Colonic mucosa (tissue), 4 donors: ENCODE measurements at regions of chr2 and their contacts with region 1.

Region 1: GRCh38 chr2:174688079-174688478 is 76.2 kb downstream of the CHRNA1 start:
- DNase-seq: no peak
- H3K4me3 ChIP-seq: no peak overlapping the region
- H3K27ac ChIP-seq: no peak overlapping the region
- H3K4me1 ChIP-seq: no peaks in the 10 kb centered on the region
- H3K27me3 ChIP-seq: peaks cover 5% of the 10 kb centered on the region
- CTCF ChIP-seq: peak; percentile 39

Region 2: GRCh38 chr2:174198822-174199564 is 489.1 kb before region 1 on chr2:
- intact Hi-C with region 1: no loop called
- DNase-seq: no peak
- H3K4me3 ChIP-seq: no peak overlapping the region
- H3K27ac ChIP-seq: no peak overlapping the region
- H3K4me1 ChIP-seq: no peaks in the 10 kb centered on the region
- H3K27me3 ChIP-seq: no peaks in the 10 kb centered on the region
- CTCF ChIP-seq: no peak

Region 3: GRCh38 chr2:174465327-174465726 is 222.8 kb before region 1 on chr2:
- intact Hi-C with region 1: loop called (anchors 2 kb)
- DNase-seq: no peak
- H3K4me3 ChIP-seq: no peak overlapping the region
- H3K27ac ChIP-seq: no peak overlapping the region
- H3K4me1 ChIP-seq: no peaks in the 10 kb centered on the region
- H3K27me3 ChIP-seq: no peaks in the 10 kb centered on the region
- CTCF ChIP-seq: no peak

Region 4: DNA sequence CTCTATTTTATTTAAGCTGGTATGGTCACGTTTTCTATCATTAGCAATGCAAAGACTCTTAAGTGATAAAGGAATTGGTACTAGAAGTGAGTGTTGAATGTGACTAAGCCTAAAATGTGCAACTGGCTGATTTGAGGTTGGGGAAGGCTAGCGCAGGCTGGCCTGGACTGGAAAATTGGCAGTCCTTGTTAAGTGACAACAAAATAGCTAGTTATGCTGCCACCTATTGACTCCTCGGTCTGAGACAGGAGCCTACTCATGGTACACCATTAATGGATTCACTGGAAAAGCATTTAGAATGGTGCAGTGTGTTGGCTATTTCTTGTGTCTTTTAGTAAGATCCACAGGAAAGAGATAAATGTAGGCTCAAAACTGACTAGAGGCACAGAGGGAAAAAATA is 84.8 kb before region 1 on chr2:
- intact Hi-C with region 1: loop called (anchors 5 kb)
- DNase-seq: peak; percentile 57
- H3K4me3 ChIP-seq: no peak overlapping the region
- H3K27ac ChIP-seq: no peak overlapping the region
- H3K4me1 ChIP-seq: no peaks in the 10 kb centered on the region
- H3K27me3 ChIP-seq: no peaks in the 10 kb centered on the region
- CTCF ChIP-seq: peak; percentile 34

Region 5: DNA sequence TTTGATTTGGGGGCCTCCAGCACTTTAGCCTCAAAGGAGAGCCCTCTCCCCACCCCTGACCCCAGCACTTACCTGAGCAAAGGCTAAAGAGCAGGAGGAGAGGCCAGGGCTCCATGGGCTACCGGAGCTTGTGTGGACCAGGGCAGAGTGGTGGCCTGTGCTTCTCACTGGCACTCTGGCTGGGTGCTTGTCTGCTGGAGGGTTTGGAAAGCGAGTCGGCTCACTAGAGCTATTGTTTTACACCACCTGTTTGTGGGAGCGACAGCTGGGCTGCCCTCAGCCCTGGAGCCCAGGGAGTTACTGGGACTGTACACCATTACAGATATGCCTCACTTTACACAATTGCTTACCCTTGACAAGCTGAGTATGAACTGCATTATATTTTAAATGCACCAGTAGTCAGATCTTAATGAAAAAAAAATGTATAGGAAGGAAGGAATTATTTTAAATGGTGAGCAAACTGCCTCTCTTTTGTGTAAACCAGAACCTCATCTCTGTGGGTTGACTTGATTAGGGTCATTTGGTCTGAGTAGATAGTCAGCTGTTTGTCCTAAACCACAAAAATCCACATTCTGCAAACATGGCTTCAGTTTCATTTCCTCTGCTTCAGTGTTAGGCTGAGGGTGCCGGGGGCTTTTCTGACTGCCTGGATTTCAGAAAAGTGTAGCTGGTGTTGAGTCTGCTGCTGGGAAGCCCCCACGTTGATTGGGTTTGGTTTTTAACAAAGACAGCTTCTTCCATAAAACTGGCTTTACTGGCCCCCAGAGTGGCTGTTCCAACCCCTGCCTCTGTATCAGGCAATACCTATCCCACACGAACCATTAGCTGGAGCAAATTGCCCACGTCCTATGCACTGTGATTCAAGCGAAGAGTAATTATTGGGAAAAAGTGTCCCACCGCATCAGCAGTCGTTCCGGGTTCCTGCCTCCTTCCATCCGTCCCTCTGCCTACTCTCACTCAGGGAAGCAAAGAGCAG is 76.5 kb after region 1 on chr2 and contains the start of gene CHRNA1:
- intact Hi-C with region 1: no loop called
- DNase-seq: no peak
- H3K4me3 ChIP-seq: no peak within 1 kb of the TSS
- H3K27ac ChIP-seq: no peak within 1 kb of the TSS
- H3K4me1 ChIP-seq: no peaks in the 10 kb centered on the region
- H3K27me3 ChIP-seq: no peaks in the 10 kb centered on the region
- CTCF ChIP-seq: no peak
- total RNA-seq, gene CHRNA1: 1.1 to 2.7 TPM

Region 6: GRCh38 chr2:175518206-175518605 is 830.1 kb after region 1 on chr2:
- intact Hi-C with region 1: no loop called
- DNase-seq: no peak
- H3K4me3 ChIP-seq: no peak overlapping the region
- H3K27ac ChIP-seq: no peak overlapping the region
- H3K4me1 ChIP-seq: no peaks in the 10 kb centered on the region
- H3K27me3 ChIP-seq: no peaks in the 10 kb centered on the region
- CTCF ChIP-seq: no peak